Astrocyte of the cerebellum (primary cell): ENCODE measurements at regions of chr10 and their contacts with region 1.

Region 1: GRCh38 chr10:75932921-75933320 is 501.5 kb downstream of the LRMDA start:
- DNase-seq: no peak
- H3K4me3 ChIP-seq: no peak overlapping the region
- CTCF ChIP-seq: no peak

Region 2: DNA sequence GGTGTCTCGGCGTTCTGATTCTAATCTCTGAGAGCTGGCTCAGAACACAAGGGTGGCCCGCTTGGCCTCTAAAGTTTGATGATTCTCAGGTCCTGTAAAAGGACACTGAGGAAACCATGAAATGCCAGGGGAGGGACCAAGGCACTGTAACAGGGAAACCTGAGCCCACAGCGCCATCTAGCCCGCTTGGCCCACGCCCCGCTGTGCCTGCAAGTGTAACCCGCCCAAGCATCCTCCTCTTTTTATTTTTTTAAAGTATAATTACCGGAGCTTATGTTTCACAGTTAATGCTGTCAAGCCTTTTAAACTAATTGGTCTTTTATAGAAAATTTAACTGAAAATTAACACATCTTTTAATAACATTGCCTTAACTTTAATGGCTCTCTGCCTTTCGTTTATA is 970.0 kb after region 1 on chr10:
- in situ Hi-C with region 1: loop called (anchors 10 kb)
- DNase-seq: no peak
- H3K4me3 ChIP-seq: no peak overlapping the region
- CTCF ChIP-seq: peak; percentile 25